ENCODE measurements at regions of chr21 and their contacts with region 1.

Region 1: DNA sequence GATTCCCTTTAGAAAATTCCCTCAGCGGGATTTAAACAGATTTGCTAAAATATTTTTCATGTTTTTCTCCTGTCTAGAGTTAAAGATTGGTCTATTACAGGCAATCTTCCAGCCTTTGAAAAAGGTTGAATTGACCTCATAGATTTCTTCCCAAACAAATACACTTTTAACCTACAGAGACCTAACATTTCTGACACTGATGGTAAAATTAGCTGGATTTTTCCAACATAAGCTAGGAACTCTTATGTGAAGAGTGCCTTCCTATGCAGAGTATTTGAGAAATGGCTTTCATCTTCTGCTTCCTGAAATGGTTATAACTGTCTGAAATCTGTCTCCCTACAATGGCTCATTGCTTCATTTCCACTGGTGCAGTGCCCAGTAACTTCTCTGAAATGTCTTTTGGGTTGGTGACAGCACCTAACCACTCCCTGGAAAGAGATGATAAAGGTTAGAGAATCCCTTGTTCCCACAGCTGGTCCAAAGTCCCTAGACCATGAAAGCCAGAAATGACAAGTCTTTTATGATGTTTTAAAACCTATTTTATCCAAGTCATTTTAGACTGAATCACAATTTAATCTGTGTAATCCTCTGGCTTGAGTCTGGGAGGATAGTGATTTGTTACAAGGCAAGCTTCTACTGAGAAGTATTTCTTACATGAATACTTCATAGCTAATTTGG is 269.4 kb downstream of the BACH1 start:
- DNase-seq: no peak
- ATAC-seq: no peak
- H3K4me3 Mint-ChIP-seq: no peak overlapping the region
- H3K27ac Mint-ChIP-seq: no peak overlapping the region
- H3K4me1 Mint-ChIP-seq: peaks cover 2% of the 10 kb centered on the region
- H3K27me3 Mint-ChIP-seq: no peaks in the 10 kb centered on the region

Region 2: GRCh38 chr21:29626801-29627470 is 58.8 kb after region 1 on chr21:
- CTCF ChIA-PET with region 1: no interaction called
- POLR2A ChIA-PET with region 1: no interaction called
- intact Hi-C with region 1: loop called in 1 of 2 experiments (anchors 10 kb)
- DNase-seq: no peak
- ATAC-seq: no peak
- H3K4me3 Mint-ChIP-seq: no peak overlapping the region
- H3K27ac Mint-ChIP-seq: no peak overlapping the region
- H3K4me1 Mint-ChIP-seq: no peaks in the 10 kb centered on the region
- H3K27me3 Mint-ChIP-seq: no peaks in the 10 kb centered on the region

Region 3: GRCh38 chr21:29637134-29637533 is 69.0 kb after region 1 on chr21:
- CTCF ChIA-PET with region 1: no interaction called
- POLR2A ChIA-PET with region 1: no interaction called
- intact Hi-C with region 1: no loop called
- DNase-seq: no peak
- ATAC-seq: no peak
- H3K4me3 Mint-ChIP-seq: no peak overlapping the region
- H3K27ac Mint-ChIP-seq: no peak overlapping the region
- H3K4me1 Mint-ChIP-seq: peaks cover 4% of the 10 kb centered on the region
- H3K27me3 Mint-ChIP-seq: no peaks in the 10 kb centered on the region